ENCODE measurements at regions of chr22 and their contacts with region 1.

Region 1: GRCh38 chr22:24516301-24516737 is 21.2 kb downstream of the UPB1 start:
- DNase-seq: no peak
- H3K4me3 ChIP-seq: no peak overlapping the region
- H3K27ac ChIP-seq: no peak overlapping the region
- H3K4me1 ChIP-seq: no peaks in the 10 kb centered on the region
- H3K27me3 ChIP-seq: no peaks in the 10 kb centered on the region
- CTCF ChIP-seq: no peak
- POLR2A ChIP-seq: no peak

Region 2: GRCh38 chr22:24059121-24059520 is 457.2 kb before region 1 on chr22:
- intact Hi-C with region 1: loop called (anchors 10 kb)
- DNase-seq: no peak
- H3K4me3 ChIP-seq: no peak overlapping the region
- H3K27ac ChIP-seq: peak overlapping the region; percentile 72 to 87
- H3K4me1 ChIP-seq: peaks cover 3 to 6% of the 10 kb centered on the region in 2 donors
- H3K27me3 ChIP-seq: no peaks in the 10 kb centered on the region
- CTCF ChIP-seq: no peak
- POLR2A ChIP-seq: no peak

Region 3: GRCh38 chr22:24532103-24532520 is 15.8 kb after region 1 on chr22:
- intact Hi-C with region 1: no loop called
- DNase-seq: no peak
- H3K4me3 ChIP-seq: no peak overlapping the region
- H3K27ac ChIP-seq: no peak overlapping the region
- H3K4me1 ChIP-seq: no peaks in the 10 kb centered on the region
- H3K27me3 ChIP-seq: no peaks in the 10 kb centered on the region
- CTCF ChIP-seq: no peak
- POLR2A ChIP-seq: no peak

Region 4: GRCh38 chr22:24542641-24543040 is 26.3 kb after region 1 on chr22:
- intact Hi-C with region 1: no loop called
- DNase-seq: peak; percentile 60 to 78
- H3K4me3 ChIP-seq: no peak overlapping the region
- H3K27ac ChIP-seq: peak overlapping the region; percentile 68 to 69
- H3K4me1 ChIP-seq: peaks cover 2 to 6% of the 10 kb centered on the region in 2 donors
- H3K27me3 ChIP-seq: no peaks in the 10 kb centered on the region
- CTCF ChIP-seq: peak in 2 of 3 donors; percentile 17 to 48
- POLR2A ChIP-seq: no peak

Region 5: DNA sequence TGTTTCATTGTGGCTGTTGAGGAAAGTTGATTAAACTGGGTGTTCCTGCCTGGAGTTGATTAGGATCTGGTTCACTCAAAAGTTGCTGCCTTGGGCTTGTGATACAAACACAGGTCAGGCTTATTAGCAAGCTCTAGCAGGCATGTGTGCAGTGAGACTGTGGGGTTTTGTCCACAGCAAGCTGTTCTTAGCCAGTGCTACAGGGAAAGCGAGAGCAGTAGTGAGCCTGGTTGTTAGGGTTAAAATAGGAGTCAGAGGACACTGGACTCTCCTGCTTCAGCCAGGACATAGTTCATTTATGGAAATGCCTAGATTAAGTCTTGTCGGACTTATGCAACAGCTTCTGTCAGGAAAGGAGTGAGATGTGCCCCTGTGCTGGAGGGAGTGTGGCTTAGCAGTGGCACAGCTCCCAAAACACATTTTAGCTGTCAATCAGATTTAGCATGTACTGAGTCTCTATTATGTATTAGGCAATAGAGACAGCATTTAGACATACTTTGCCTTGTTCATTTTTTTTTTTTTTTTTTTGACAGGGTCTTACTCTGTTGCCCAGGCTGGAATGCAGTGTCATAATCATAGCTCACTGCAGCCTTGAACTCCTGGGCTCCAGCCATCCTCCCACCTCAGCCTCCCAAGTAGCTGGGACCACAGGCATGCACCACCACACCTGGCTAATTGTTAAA is 48.2 kb after region 1 on chr22:
- intact Hi-C with region 1: no loop called
- DNase-seq: no peak
- H3K4me3 ChIP-seq: no peak overlapping the region
- H3K27ac ChIP-seq: peak overlapping the region in 1 of 2 donors; percentile 10
- H3K4me1 ChIP-seq: peaks cover 0 to 3% of the 10 kb centered on the region in 2 donors
- H3K27me3 ChIP-seq: no peaks in the 10 kb centered on the region
- CTCF ChIP-seq: no peak
- POLR2A ChIP-seq: no peak

Region 6: GRCh38 chr22:24867323-24868022 is 351.2 kb after region 1 on chr22:
- intact Hi-C with region 1: no loop called
- DNase-seq: no peak
- H3K4me3 ChIP-seq: no peak overlapping the region
- H3K27ac ChIP-seq: no peak overlapping the region
- H3K4me1 ChIP-seq: no peaks in the 10 kb centered on the region
- H3K27me3 ChIP-seq: no peaks in the 10 kb centered on the region
- CTCF ChIP-seq: no peak
- POLR2A ChIP-seq: no peak

Measured in breast epithelium (tissue), 4 donors.